BJ (cell line): ENCODE measurements at regions of chr19 and their contacts with region 1.

Region 1: GRCh38 chr19:18388100-18388959 is 2.4 kb downstream of the GDF15 start:
- DNase-seq: no peak
- H3K4me3 ChIP-seq: peak overlapping the region; percentile 81
- H3K27me3 ChIP-seq: no peaks in the 10 kb centered on the region
- CTCF ChIP-seq: peak; percentile 76

Region 2: DNA sequence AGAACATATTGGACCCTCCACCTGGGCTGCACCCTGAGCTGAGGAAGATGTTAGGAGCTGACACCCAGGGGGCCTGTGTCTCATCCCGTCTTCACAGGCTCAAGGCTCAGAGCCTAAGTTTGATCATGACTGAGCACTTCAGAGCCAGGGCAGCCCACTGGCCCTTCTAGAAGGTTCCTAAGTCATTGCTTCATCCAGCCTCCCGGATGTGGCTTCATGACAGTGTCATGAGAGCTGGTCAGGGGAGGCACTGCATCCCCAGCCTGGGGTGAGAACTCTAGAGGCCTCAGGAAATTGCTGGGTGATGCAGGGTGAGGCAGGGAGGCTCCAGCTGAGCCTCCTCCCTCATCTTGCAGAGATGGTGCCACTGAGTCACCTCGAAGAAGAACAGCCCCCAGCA is 260.3 kb before region 1 on chr19:
- CTCF ChIA-PET with region 1: no interaction called
- POLR2A ChIA-PET with region 1: no interaction called
- DNase-seq: no peak
- H3K4me3 ChIP-seq: no peak overlapping the region
- H3K27me3 ChIP-seq: no peaks in the 10 kb centered on the region
- CTCF ChIP-seq: no peak

Region 3: DNA sequence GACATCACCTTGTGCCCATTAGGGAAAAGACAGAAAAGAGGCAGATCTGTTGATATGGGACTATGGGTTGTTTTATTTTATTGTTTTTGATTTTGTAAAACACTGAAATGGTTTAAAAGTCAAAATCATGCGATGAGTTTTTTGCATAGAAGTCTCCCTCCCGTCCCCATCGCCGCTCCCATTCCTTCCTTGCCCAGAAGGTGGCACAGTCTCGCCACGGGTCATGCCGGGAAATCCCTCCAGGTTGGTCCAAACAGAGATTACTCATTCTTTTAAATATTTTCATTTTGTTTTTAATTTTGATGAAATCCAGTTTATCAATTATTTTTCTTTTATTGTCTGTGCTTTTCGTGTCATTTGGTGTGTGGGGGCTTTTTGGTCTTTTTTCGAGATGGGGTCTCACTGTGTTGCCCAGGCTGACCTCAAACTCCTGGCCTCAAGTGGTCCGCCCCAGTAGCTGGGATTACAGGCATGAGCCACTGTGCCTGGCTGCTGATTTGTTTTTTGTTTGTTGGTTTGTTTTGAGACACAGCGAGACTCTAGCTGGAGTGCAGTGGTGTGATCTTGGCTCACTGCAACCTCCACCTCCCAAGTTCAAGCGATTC is 38.7 kb before region 1 on chr19:
- CTCF ChIA-PET with region 1: interaction called, 27 read pairs
- POLR2A ChIA-PET with region 1: no interaction called
- DNase-seq: no peak
- H3K4me3 ChIP-seq: no peak overlapping the region
- H3K27me3 ChIP-seq: no peaks in the 10 kb centered on the region
- CTCF ChIP-seq: peak; percentile 88

Region 4: GRCh38 chr19:18357041-18357440 is 31.3 kb before region 1 on chr19:
- CTCF ChIA-PET with region 1: interaction called, 27 read pairs
- POLR2A ChIA-PET with region 1: no interaction called
- DNase-seq: no peak
- H3K4me3 ChIP-seq: no peak overlapping the region
- H3K27me3 ChIP-seq: no peaks in the 10 kb centered on the region
- CTCF ChIP-seq: no peak

Region 5: DNA sequence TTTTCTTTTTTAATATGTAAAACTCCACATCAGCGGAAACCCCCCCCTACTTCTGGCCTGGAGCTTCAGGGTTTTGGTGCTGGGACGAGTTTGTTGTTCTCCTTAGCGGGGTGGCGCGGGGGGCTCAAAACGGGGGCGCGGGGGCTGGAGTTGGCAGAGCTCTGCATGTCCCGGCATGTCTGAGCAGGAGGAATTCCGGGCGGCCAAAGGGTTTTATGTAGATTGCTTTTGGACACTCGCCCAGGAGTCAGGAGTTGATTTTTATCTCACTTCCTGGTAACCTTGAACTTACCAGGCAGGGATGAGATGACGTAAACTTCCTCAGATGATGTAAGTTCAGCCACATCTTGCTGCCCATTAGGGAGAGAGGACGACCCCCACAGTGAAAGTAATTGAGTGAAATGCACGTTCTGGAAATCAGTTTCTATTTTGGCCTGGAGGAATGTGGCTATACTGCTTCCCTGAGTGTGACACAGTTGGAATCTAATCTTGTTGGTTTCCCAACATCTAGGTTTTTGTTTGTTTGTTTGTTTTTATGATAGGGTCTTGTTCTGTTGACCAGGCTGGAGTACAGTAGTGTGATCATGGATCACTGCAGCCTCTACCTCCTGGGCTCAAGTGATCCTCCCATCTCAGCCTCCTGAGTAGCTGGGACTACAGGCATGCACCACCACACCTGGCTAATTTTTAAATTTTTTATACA is 23.4 kb before region 1 on chr19:
- CTCF ChIA-PET with region 1: interaction called, 20 read pairs
- POLR2A ChIA-PET with region 1: no interaction called
- DNase-seq: peak; percentile 99
- H3K4me3 ChIP-seq: no peak overlapping the region
- H3K27me3 ChIP-seq: no peaks in the 10 kb centered on the region
- CTCF ChIP-seq: no peak

Region 6: GRCh38 chr19:18401580-18402112 is 13.3 kb after region 1 on chr19:
- CTCF ChIA-PET with region 1: interaction called, 68 read pairs
- POLR2A ChIA-PET with region 1: no interaction called
- DNase-seq: no peak
- H3K4me3 ChIP-seq: no peak overlapping the region
- H3K27me3 ChIP-seq: no peaks in the 10 kb centered on the region
- CTCF ChIP-seq: peak; percentile 73

Region 7: DNA sequence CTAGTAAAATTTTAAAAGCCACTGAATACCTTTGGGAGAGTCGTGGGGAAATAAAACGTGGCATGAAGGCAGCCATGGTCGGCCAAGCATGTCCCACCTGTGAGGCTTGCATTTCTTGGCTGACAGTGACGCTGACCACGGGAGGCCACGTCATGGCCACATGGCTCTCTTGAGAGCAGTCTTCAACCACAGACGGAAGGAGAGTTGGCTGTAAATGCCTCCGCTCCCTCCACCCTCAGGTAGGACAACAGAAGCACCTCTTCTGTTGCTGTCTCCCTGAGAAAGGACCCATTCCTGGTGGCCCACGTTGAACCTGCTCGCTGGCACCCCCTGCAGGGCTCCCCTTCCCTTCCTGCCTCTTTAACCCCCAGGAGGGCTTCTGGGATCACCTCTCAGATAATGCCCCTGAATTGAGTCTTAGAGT is 19.7 kb after region 1 on chr19:
- CTCF ChIA-PET with region 1: interaction called, 101 read pairs
- POLR2A ChIA-PET with region 1: no interaction called
- DNase-seq: no peak
- H3K4me3 ChIP-seq: no peak overlapping the region
- H3K27me3 ChIP-seq: no peaks in the 10 kb centered on the region
- CTCF ChIP-seq: peak; percentile 56

Region 8: DNA sequence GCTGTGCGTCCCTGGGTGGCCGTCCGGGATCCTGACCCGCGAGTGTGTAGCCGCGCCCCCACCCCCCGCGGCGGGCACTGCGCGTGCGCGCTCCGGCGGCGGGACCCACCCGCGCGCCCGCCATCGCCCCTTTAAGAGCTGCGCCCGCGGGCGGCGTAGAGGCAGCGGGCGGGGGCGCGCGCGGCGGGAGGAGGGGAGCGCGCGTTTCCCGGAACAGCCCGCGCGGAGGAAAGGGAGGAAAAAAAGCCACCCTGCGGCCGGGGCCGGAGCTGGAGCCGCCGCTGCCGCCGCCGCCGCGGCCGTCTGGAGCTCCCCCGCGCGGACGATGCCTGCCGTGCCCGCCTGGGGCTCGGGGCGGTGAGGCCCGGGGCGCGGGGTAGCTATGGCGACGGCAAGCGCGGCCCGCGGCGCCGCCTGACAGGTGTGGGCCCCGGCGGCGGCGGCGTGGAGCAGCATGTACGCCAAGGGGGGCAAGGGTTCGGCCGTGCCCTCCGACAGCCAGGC is 30.9 kb after region 1 on chr19 and contains the start of gene SSBP4:
- CTCF ChIA-PET with region 1: interaction called, 101 read pairs
- POLR2A ChIA-PET with region 1: no interaction called
- DNase-seq: no peak
- H3K4me3 ChIP-seq: peak within 1 kb of the TSS; percentile 87
- H3K27me3 ChIP-seq: no peaks in the 10 kb centered on the region
- CTCF ChIP-seq: no peak
- polyA plus RNA-seq, gene SSBP4: 16.3 and 24.1 TPM in 2 replicates